BJ (cell line): ENCODE measurements at regions of chr22 and their contacts with region 1.

Region 1: GRCh38 chr22:41940832-41941765 is 5.9 kb downstream of the CENPM start:
- DNase-seq: no peak
- H3K4me3 ChIP-seq: no peak overlapping the region
- H3K27me3 ChIP-seq: no peaks in the 10 kb centered on the region
- CTCF ChIP-seq: peak; percentile 92

Region 2: DNA sequence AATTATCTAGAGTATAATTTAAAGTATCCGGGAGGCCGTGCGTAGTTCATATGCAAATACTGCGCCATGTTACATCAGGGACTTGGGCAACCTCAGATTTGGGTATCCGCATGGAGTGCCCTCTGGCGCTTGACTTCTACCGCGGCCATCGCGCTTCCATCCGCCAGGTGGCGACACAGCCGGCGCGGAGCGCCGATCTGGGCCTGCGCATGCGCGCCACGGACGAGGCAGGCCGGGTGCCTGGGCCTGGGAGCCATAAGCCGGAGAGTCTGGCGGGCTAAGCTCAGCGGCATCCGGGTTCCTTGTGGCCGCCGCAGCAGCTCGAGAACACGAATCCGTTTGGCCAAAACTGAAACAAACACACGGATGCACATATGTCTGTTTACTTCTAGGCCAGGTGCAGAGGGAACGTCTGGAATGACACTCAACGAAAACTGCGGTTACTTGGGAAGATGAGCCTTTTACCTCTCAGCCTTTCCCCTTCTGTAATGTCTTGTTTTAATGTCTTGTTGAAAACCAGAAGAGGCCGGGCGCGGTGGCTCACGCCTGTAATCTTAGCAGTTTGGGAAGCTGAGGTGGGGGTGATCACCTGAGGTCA is 274.3 kb before region 1 on chr22:
- CTCF ChIA-PET with region 1: interaction called, 20 read pairs
- POLR2A ChIA-PET with region 1: no interaction called
- DNase-seq: peak; percentile 47
- H3K4me3 ChIP-seq: peak overlapping the region; percentile 9
- H3K27me3 ChIP-seq: no peaks in the 10 kb centered on the region
- CTCF ChIP-seq: peak; percentile 99

Region 3: DNA sequence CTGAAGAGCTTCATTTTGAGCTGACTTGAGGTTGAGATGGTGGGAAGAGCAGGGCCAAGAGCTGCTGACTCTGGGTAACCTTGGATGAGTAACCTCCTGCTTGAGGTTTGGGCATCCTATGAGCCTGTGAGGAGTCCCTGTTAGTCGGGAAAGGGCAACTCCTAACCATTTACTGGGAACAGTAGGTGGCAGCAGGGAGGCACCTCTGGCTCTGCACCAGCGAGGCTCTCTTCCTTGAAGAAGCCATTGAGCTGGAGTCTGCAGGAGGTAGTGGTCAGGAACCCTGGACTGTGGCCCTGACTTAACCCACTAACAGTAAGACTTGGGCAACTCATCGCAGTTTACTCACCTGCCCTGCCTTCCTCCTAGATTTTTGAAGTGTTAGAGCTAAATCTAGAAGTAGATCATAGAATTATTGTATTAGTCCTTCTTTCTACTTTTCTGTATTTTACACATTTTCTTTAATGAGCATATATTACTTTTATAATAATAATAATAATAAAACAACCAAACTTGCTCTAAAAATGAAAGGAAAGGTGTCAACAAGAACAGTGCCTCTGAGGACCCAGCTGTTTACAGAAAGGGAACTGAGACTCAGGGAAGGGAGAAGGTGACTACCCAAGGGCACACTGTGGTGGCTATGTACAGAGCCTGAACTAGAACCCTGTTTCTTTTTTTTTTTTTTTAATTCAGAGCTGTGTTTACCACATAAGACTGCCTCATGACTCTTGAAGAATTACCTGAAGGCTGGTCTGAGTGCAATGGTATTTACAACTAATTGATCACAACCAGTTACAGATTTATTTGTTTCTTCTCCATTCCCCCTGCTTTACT is 194.3 kb before region 1 on chr22:
- CTCF ChIA-PET with region 1: interaction called, 40 read pairs
- POLR2A ChIA-PET with region 1: no interaction called
- DNase-seq: peak; percentile 38
- H3K4me3 ChIP-seq: no peak overlapping the region
- H3K27me3 ChIP-seq: peaks cover 16% of the 10 kb centered on the region
- CTCF ChIP-seq: peak; percentile 90

Region 4: GRCh38 chr22:41822317-41823060 is 118.6 kb before region 1 on chr22:
- CTCF ChIA-PET with region 1: interaction called, 25 read pairs
- POLR2A ChIA-PET with region 1: no interaction called
- DNase-seq: no peak
- H3K4me3 ChIP-seq: no peak overlapping the region
- H3K27me3 ChIP-seq: no peaks in the 10 kb centered on the region
- CTCF ChIP-seq: peak; percentile 28

Region 5: GRCh38 chr22:41832553-41833368 is 108.3 kb before region 1 on chr22 and contains the start of gene SREBF2:
- CTCF ChIA-PET with region 1: interaction called, 25 read pairs
- POLR2A ChIA-PET with region 1: interaction called, 8 read pairs
- DNase-seq: peak; percentile 98
- H3K4me3 ChIP-seq: peak within 1 kb of the TSS; percentile 99
- H3K27me3 ChIP-seq: no peaks in the 10 kb centered on the region
- CTCF ChIP-seq: no peak
- polyA plus RNA-seq, gene SREBF2: 20.3 and 26.2 TPM in 2 replicates

Region 6: GRCh38 chr22:41925655-41926460 is 15.2 kb before region 1 on chr22:
- CTCF ChIA-PET with region 1: interaction called, 40 read pairs
- POLR2A ChIA-PET with region 1: no interaction called
- DNase-seq: no peak
- H3K4me3 ChIP-seq: peak overlapping the region; percentile 33
- H3K27me3 ChIP-seq: peaks cover 10% of the 10 kb centered on the region; the same call in 1 of the 2 replicates
- CTCF ChIP-seq: peak; percentile 61

Region 7: DNA sequence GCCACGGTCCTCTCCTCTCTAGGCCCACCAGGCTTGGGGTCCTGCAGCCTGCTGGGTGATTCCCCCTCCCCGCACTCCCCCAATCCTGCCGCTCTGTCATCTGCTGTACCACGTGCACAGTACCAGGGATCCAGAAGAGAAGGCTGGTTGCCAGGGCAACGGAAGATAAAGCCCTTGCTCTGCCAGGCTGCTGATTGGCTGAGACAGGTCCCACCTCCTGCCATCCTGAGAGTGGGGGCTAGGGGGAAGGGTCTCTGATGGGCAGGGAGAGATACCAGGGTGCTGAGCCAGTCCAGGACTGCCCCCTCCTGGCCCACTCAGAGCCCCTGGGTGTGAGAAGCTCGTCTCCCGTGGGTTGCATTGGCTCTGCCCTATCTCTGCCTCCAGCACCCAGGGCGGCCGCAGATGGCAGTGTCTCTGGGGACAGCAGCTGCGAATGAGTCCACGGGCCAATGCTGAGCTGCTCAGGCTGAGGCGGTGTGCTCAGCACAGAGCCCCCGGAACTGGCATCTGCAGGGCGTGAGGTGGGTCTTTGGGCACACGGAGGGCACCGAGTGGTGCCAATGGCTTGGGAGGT is 10.9 kb after region 1 on chr22 and contains the start of gene SMIM45:
- CTCF ChIA-PET with region 1: interaction called, 10 read pairs
- POLR2A ChIA-PET with region 1: no interaction called
- DNase-seq: no peak
- H3K4me3 ChIP-seq: no peak within 1 kb of the TSS
- H3K27me3 ChIP-seq: no peaks in the 10 kb centered on the region
- CTCF ChIP-seq: no peak